PC-3 (cell line): ENCODE measurements at regions of chr1 and their contacts with region 1.

Region 1: GRCh38 chr1:172745014-172745413 is 86.1 kb downstream of the FASLG start:
- DNase-seq: peak; percentile 99
- ATAC-seq: peak; percentile 27
- H3K4me3 ChIP-seq: no peak overlapping the region
- H3K27ac ChIP-seq: no peak overlapping the region
- H3K4me1 ChIP-seq: peaks cover 34% of the 10 kb centered on the region
- H3K27me3 ChIP-seq: no peaks in the 10 kb centered on the region
- CTCF ChIP-seq: peak; percentile 100

Region 2: GRCh38 chr1:172041742-172042141 is 703.3 kb before region 1 on chr1:
- CTCF ChIA-PET with region 1: no interaction called
- POLR2A ChIA-PET with region 1: interaction called, 15 read pairs
- intact Hi-C with region 1: no loop called
- DNase-seq: peak; percentile 72
- ATAC-seq: peak; percentile 48
- H3K4me3 ChIP-seq: no peak overlapping the region
- H3K27ac ChIP-seq: no peak overlapping the region
- H3K4me1 ChIP-seq: peaks cover 19% of the 10 kb centered on the region
- H3K27me3 ChIP-seq: no peaks in the 10 kb centered on the region
- CTCF ChIP-seq: peak; percentile 80

Region 3: GRCh38 chr1:172638885-172639831 is 105.9 kb before region 1 on chr1:
- CTCF ChIA-PET with region 1: no interaction called
- POLR2A ChIA-PET with region 1: no interaction called
- intact Hi-C with region 1: no loop called
- DNase-seq: peak; percentile 100
- ATAC-seq: peak; percentile 78
- H3K4me3 ChIP-seq: peak overlapping the region; percentile 36
- H3K27ac ChIP-seq: peak overlapping the region; percentile 78
- H3K4me1 ChIP-seq: peaks cover 71% of the 10 kb centered on the region
- H3K27me3 ChIP-seq: no peaks in the 10 kb centered on the region
- CTCF ChIP-seq: no peak

Region 4: GRCh38 chr1:172789866-172790644 is 45.0 kb after region 1 on chr1:
- CTCF ChIA-PET with region 1: no interaction called
- POLR2A ChIA-PET with region 1: no interaction called
- intact Hi-C with region 1: no loop called
- DNase-seq: no peak
- ATAC-seq: no peak
- H3K4me3 ChIP-seq: no peak overlapping the region
- H3K27ac ChIP-seq: no peak overlapping the region
- H3K4me1 ChIP-seq: no peaks in the 10 kb centered on the region
- H3K27me3 ChIP-seq: no peaks in the 10 kb centered on the region
- CTCF ChIP-seq: no peak

Region 5: DNA sequence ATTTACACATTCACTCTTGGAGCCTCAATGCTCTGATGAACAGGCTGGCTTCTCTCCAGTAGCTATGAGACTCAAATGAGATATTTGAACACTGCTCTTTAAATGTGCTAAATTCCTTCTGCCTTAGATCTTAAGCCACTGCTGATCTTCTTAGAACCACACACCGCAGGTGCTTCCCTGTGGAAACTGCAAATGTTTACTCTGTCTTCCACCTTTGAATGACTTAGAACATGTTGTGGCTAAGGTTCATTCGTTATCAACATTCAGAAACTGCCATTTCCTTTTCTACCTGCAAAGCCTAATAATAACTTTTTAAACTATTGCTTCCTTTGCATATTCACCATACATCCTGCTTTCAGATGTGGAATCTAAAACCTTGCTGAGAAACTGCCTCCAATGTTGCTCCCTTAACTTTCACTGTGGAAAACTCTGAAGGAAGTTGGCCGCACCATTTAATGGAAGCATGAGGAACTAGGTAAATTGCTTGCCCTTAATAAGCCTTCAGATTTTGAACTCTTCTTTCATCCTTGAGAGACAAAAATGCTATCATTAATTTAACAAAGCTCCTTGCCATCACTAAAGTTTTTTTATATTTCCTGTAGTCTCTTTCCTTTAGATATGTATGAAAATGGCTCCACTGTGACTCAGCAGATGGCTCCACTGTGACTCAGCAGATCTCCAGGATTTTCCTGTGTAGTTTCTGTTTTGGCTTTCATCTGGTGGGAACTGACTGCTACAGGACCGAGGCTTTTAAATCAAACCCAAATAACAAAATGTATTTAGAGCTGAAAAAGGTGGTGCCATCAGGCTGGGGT is 162.0 kb after region 1 on chr1:
- CTCF ChIA-PET with region 1: no interaction called
- POLR2A ChIA-PET with region 1: interaction called, 3 read pairs
- intact Hi-C with region 1: loop called (anchors 1 kb)
- DNase-seq: peak; percentile 99
- ATAC-seq: peak; percentile 25
- H3K4me3 ChIP-seq: no peak overlapping the region; the same call in 1 of the 2 replicates
- H3K27ac ChIP-seq: peak overlapping the region; percentile 77
- H3K4me1 ChIP-seq: peaks cover 64% of the 10 kb centered on the region
- H3K27me3 ChIP-seq: no peaks in the 10 kb centered on the region
- CTCF ChIP-seq: no peak

Region 6: GRCh38 chr1:173062156-173062938 is 317.3 kb after region 1 on chr1:
- CTCF ChIA-PET with region 1: interaction called, 3 read pairs
- POLR2A ChIA-PET with region 1: no interaction called
- intact Hi-C with region 1: loop called (anchors 2 kb)
- DNase-seq: peak; percentile 100
- ATAC-seq: peak; percentile 100
- H3K4me3 ChIP-seq: no peak overlapping the region
- H3K27ac ChIP-seq: peak overlapping the region; percentile 43
- H3K4me1 ChIP-seq: peaks cover 36% of the 10 kb centered on the region
- H3K27me3 ChIP-seq: no peaks in the 10 kb centered on the region
- CTCF ChIP-seq: no peak

Region 7: DNA sequence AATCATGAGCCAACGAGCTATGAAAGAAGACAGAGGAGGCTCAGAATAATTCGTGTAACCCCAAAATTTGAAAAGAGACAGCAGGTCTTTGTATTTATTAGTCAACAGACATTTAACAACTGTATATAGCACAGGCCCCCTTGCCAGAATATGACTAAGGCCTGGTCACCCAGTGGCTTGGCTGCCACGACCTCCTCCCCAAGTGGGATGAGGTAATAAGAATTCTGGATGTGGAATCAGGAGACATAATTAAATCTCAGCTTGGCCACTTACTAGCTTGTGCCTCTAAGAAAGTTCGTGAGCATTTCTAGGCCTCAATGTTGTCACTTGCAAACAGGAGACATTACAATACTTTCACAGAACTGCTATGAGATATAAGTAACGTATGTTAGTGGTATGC is 596.3 kb after region 1 on chr1:
- CTCF ChIA-PET with region 1: no interaction called
- POLR2A ChIA-PET with region 1: no interaction called
- intact Hi-C with region 1: loop called (anchors 5 kb)
- DNase-seq: peak; percentile 98
- ATAC-seq: peak; percentile 96
- H3K4me3 ChIP-seq: no peak overlapping the region
- H3K27ac ChIP-seq: peak overlapping the region; percentile 5; the same call in 1 of the 2 replicates
- H3K4me1 ChIP-seq: peaks cover 14% of the 10 kb centered on the region
- H3K27me3 ChIP-seq: no peaks in the 10 kb centered on the region
- CTCF ChIP-seq: no peak

Region 8: GRCh38 chr1:173476664-173477285 is 731.8 kb after region 1 on chr1:
- CTCF ChIA-PET with region 1: interaction called, 4 read pairs
- POLR2A ChIA-PET with region 1: no interaction called
- intact Hi-C with region 1: loop called (anchors 1 kb)
- DNase-seq: peak; percentile 100
- ATAC-seq: peak; percentile 77
- H3K4me3 ChIP-seq: peak overlapping the region; percentile 74
- H3K27ac ChIP-seq: peak overlapping the region; percentile 68
- H3K4me1 ChIP-seq: peaks cover 60% of the 10 kb centered on the region
- H3K27me3 ChIP-seq: no peaks in the 10 kb centered on the region
- CTCF ChIP-seq: no peak; the same call in 1 of the 2 replicates

Region 9: DNA sequence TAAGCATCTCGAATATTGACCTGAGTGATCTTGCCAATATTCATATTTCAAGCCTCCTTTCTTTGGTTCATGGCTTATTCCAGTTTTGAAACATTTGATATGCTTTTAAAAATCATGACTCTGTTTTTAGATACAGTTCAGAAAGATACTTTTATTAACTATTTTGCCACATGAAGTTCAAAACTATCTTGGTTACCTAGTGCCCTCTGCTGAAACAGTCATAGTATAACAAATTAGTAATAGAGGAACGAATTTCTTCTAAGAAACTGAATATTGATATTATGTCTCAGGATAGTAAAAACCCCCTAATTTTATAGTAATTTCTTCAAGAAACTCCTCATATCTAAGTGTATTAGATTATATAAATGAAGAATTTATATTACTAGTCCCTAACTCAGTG is 1329.7 kb after region 1 on chr1:
- CTCF ChIA-PET with region 1: no interaction called
- POLR2A ChIA-PET with region 1: no interaction called
- intact Hi-C with region 1: loop called (anchors 10 kb)
- DNase-seq: peak; percentile 42
- ATAC-seq: no peak; the same call in 1 of the 2 replicates
- H3K4me3 ChIP-seq: no peak overlapping the region
- H3K27ac ChIP-seq: no peak overlapping the region
- H3K4me1 ChIP-seq: no peaks in the 10 kb centered on the region
- H3K27me3 ChIP-seq: no peaks in the 10 kb centered on the region
- CTCF ChIP-seq: peak; percentile 62